ENCODE measurements at regions of chr6 and their contacts with region 1.

Region 1: DNA sequence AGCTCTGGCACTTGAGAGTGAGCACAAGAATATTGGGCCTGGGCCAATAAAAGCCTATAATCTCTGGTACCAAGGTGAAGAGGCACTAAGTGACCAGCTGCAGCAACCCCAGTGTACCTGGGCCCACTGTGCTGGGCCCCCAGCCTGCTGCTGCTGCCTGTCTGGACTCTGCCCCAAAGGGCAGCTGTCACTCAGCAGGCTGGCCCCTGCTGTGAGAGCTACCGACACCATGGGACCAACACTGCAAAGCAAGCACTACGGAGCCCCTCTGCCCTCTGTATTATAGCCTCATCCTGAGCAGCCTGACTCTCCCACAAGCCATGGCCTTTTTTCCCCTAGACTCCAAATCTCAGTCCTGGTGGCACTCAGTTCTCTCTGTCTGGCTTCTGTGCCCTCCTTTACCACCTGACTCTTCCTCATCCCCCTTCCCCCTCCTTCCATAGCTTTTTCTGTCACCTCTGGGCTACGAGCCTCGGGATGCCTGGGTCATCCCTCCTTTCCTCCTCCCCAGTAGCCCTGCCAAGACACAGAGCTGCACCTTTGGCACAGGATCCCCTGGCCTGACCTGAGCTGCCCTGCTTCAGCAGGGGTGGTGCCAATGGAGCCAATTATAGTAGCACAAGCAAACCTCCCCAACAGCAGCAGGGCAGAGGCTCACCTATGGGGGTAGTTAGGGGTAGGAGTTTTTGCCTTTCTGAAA is 14.2 kb downstream of the RRP36 start:
- DNase-seq: no peak
- ATAC-seq: no peak
- H3K4me3 ChIP-seq: no peak overlapping the region
- H3K27ac ChIP-seq: no peak overlapping the region; the same call in 2 of the 3 replicates
- H3K4me1 ChIP-seq: peaks cover 0 to 10% of the 10 kb centered on the region in 2 experiments; a peak in 3 of 5 replicates
- H3K27me3 ChIP-seq: no peaks in the 10 kb centered on the region
- CTCF ChIP-seq: no peak
- EP300 ChIP-seq: no peak
- POLR2A ChIP-seq: no peak
- RAD21 ChIP-seq: no peak

Region 2: GRCh38 chr6:43021270-43022047 is 14.2 kb before region 1 on chr6 and contains the start of gene RRP36:
- CTCF ChIA-PET with region 1: interaction called, 4 read pairs
- POLR2A ChIA-PET with region 1: interaction called, 10 read pairs
- in situ Hi-C with region 1: no loop called
- intact Hi-C with region 1: no loop called
- DNase-seq: peak; percentile 85 to 92 (median 90)
- ATAC-seq: peak; percentile 93
- H3K4me3 ChIP-seq: peak within 1 kb of the TSS; percentile 72
- H3K27ac ChIP-seq: peak within 1 kb of the TSS; percentile 83
- H3K4me1 ChIP-seq: peaks cover 34 to 35% of the 10 kb centered on the region in 2 experiments
- H3K27me3 ChIP-seq: no peaks in the 10 kb centered on the region
- CTCF ChIP-seq: no peak
- EP300 ChIP-seq: no peak; the same call in 1 of the 2 replicates
- POLR2A ChIP-seq: peak; percentile 87
- RAD21 ChIP-seq: no peak
- polyA plus RNA-seq, gene RRP36: 27.6 to 31.7 TPM

Region 3: DNA sequence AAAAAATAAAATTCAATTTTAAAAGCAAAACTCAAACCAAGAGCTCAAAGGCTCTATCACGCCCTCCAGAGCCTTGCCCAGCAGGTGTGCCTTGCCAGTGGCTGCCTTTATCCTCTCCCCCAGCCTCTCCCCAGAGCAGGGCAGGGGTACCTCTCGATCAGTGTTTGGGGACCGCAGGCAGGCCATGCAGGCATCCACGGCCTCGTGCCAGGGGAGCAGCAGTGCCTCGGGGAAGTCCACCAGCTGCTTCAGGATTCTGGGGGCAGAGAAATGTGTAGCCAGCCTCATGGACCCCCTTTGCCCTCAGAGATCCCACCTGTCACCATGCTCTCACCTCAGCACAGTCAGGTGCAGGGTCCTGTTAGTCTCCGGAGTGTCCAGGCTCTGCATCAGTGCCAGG is 12.4 kb after region 1 on chr6:
- CTCF ChIA-PET with region 1: no interaction called
- POLR2A ChIA-PET with region 1: interaction called, 22 read pairs
- in situ Hi-C with region 1: no loop called
- intact Hi-C with region 1: no loop called
- DNase-seq: no peak
- ATAC-seq: no peak
- H3K4me3 ChIP-seq: no peak overlapping the region
- H3K27ac ChIP-seq: no peak overlapping the region
- H3K4me1 ChIP-seq: peaks cover 14 to 17% of the 10 kb centered on the region in 2 experiments
- H3K27me3 ChIP-seq: no peaks in the 10 kb centered on the region
- CTCF ChIP-seq: no peak
- EP300 ChIP-seq: no peak
- POLR2A ChIP-seq: no peak
- RAD21 ChIP-seq: no peak